ENCODE measurements at regions of chr4 and their contacts with region 1.

Region 1: DNA sequence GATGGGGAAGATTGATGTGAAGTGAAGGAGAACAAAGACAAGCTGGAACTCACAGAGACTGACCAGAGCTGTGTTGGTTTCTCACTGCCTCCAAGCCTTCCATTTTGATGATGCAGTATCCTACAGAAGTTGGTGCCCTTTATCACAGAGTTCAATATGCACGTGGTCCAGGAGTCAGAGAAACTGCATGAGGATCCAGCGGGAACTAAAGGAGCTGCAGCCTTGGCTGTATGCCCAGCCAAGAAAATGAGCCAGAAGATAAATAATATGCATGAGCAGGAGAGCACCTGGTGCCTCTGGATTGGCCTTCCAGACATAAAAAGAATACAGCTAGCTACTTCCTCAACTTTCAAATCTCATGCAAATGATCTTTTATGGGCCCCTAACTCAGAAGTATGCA is 44.3 kb upstream of the DCLK2 start:
- DNase-seq: no peak
- H3K4me3 ChIP-seq: no peak overlapping the region
- H3K27ac ChIP-seq: no peak overlapping the region
- H3K4me1 ChIP-seq: peaks cover 0 to 6% (median 1%) of the 10 kb centered on the region in 4 experiments; a peak in 1 of 7 replicates
- H3K27me3 ChIP-seq: peaks cover 0 to 3% (median 0%) of the 10 kb centered on the region in 4 experiments; a peak in 2 of 7 replicates
- CTCF ChIP-seq: no peak
- EP300 ChIP-seq: no peak
- POLR2A ChIP-seq: no peak
- RAD21 ChIP-seq: no peak

Region 2: GRCh38 chr4:149754526-149754925 is 279.4 kb before region 1 on chr4:
- CTCF ChIA-PET with region 1: no interaction called
- POLR2A ChIA-PET with region 1: no interaction called
- DNase-seq: no peak
- H3K4me3 ChIP-seq: no peak overlapping the region
- H3K27ac ChIP-seq: no peak overlapping the region
- H3K4me1 ChIP-seq: no peaks in the 10 kb centered on the region
- H3K27me3 ChIP-seq: no peaks in the 10 kb centered on the region
- CTCF ChIP-seq: no peak
- EP300 ChIP-seq: no peak
- POLR2A ChIP-seq: no peak
- RAD21 ChIP-seq: no peak

Region 3: DNA sequence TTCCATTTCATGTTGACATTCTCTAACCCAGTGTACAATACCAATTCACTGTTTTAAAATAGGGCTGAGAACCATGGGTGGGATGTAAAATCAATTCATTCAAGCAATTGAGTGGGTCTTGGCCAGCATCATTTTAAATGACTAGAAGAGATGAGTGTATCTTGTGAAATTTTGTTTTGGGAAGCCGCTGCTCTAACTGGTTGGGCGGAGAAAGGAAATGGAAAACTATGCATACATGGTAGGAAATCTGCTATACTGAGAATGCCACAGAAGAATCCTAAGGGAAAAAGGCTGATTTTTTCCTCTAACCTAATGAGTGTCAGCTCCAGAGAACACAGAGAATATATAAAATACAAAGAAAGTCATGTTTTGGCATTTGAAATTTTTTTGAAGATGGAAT is 10.4 kb before region 1 on chr4:
- CTCF ChIA-PET with region 1: interaction called, 10 read pairs
- POLR2A ChIA-PET with region 1: no interaction called
- DNase-seq: no peak
- H3K4me3 ChIP-seq: no peak overlapping the region
- H3K27ac ChIP-seq: no peak overlapping the region
- H3K4me1 ChIP-seq: no peaks in the 10 kb centered on the region
- H3K27me3 ChIP-seq: no peaks in the 10 kb centered on the region
- CTCF ChIP-seq: no peak
- EP300 ChIP-seq: no peak
- POLR2A ChIP-seq: no peak
- RAD21 ChIP-seq: no peak

Region 4: GRCh38 chr4:150045410-150045809 is 11.5 kb after region 1 on chr4:
- CTCF ChIA-PET with region 1: no interaction called
- POLR2A ChIA-PET with region 1: no interaction called
- DNase-seq: no peak
- H3K4me3 ChIP-seq: no peak overlapping the region
- H3K27ac ChIP-seq: no peak overlapping the region
- H3K4me1 ChIP-seq: no peaks in the 10 kb centered on the region
- H3K27me3 ChIP-seq: no peaks in the 10 kb centered on the region
- CTCF ChIP-seq: no peak
- EP300 ChIP-seq: no peak
- POLR2A ChIP-seq: no peak
- RAD21 ChIP-seq: no peak